ENCODE measurements at regions of chr20 and their contacts with region 1.

Region 1: GRCh38 chr20:2101865-2102584 is 398 bp downstream of the STK35 start:
- DNase-seq: peak; percentile 92 to 96
- ATAC-seq: peak; percentile 92 to 97 (median 94)
- H3K4me3 ChIP-seq: peak overlapping the region; percentile 67 to 98 (median 92)
- H3K27ac ChIP-seq: peak overlapping the region; percentile 97 to 100 (median 100)
- H3K4me1 ChIP-seq: peaks cover 9 to 45% (median 40%) of the 10 kb centered on the region in 9 donors
- H3K27me3 ChIP-seq: no peaks in the 10 kb centered on the region
- CTCF ChIP-seq: peak in 1 of 9 donors; percentile 3

Region 2: DNA sequence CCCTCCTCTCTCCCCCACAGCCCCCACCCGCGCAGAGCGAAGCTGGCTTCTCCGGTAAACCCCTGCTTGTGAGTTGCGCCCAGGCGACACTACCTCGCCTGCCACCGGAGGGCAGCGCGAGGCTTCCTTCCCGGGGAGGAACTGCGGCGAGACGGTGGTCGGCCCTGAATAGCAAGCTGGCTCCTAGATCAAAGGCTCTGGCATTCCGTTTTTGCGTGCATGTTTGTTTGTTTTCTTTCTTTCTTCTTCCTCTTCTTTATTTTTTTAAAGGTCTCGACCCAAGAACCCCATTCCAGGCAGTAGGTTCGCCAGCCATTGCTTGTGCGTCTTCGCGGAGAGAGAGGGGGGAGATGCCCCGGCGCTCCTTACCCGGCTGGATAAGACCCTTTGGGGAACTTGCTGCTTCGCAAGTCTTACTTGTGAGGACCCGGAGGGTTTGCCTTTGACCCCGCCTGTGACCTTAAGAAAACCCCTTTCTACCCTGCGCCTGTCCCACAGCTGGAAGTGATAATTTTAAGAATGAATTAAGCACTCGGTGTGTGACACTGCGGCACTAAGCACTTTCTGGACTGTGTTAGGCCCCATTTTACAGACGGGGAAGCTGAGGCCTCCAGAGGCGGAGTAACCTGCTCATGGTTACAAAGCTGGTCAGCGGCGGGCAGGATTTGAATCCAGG is 299.5 kb before region 1 on chr20:
- intact Hi-C with region 1: loop called in 1 of 10 experiments (anchors 10 kb)
- DNase-seq: peak; percentile 69 to 70
- ATAC-seq: peak; percentile 72 to 94 (median 88)
- H3K4me3 ChIP-seq: peak overlapping the region; percentile 18 to 76 (median 64)
- H3K27ac ChIP-seq: peak overlapping the region; percentile 57 to 90 (median 86)
- H3K4me1 ChIP-seq: peaks cover 6 to 39% (median 19%) of the 10 kb centered on the region in 9 donors
- H3K27me3 ChIP-seq: peaks cover 0 to 9% (median 0%) of the 10 kb centered on the region in 7 donors
- CTCF ChIP-seq: peak; percentile 41 to 85 (median 67)

Region 3: GRCh38 chr20:2045101-2045500 is 56.9 kb before region 1 on chr20:
- intact Hi-C with region 1: no loop called
- DNase-seq: no peak
- ATAC-seq: no peak
- H3K4me3 ChIP-seq: no peak overlapping the region
- H3K27ac ChIP-seq: no peak overlapping the region
- H3K4me1 ChIP-seq: no peaks in the 10 kb centered on the region
- H3K27me3 ChIP-seq: peaks cover 0 to 21% (median 5%) of the 10 kb centered on the region in 7 donors
- CTCF ChIP-seq: no peak

Region 4: DNA sequence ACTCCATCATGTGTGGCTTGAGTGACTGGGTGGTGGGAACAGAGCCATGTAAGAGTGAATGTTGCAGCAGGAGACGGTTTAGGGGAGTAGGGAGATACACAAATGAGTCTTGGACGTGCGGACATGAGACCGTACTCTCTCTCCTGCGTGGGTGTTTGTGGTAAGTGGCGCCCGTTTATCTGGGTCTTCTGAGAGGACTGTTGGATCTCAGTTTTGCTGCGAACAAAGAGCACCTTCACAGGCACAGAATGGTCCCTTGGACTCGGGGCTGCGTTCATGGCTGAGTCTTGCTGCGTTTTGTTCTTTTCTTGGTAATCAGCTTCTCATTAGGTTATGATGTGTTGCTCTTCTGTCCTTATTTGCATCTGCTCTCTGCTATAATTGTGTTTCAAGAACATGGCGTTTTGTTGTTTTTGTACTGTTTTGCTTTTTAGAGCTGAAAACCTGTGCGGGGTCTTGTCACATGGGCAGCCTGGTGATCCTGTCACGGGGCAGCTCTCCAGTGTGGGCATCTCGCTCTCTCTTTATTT is 28.1 kb after region 1 on chr20:
- intact Hi-C with region 1: no loop called
- DNase-seq: no peak
- ATAC-seq: peak in 3 of 8 donors; percentile 5 to 23 (median 9)
- H3K4me3 ChIP-seq: no peak overlapping the region
- H3K27ac ChIP-seq: peak overlapping the region in 7 of 10 donors; percentile 7 to 53 (median 21)
- H3K4me1 ChIP-seq: peaks cover 38 to 95% (median 88%) of the 10 kb centered on the region in 9 donors
- H3K27me3 ChIP-seq: no peaks in the 10 kb centered on the region
- CTCF ChIP-seq: no peak

Region 5: GRCh38 chr20:2140561-2140960 is 38.5 kb after region 1 on chr20:
- intact Hi-C with region 1: loop called in 7 of 10 experiments (anchors 2 to 5 kb)
- DNase-seq: peak; percentile 54 to 80
- ATAC-seq: peak; percentile 81 to 92 (median 84)
- H3K4me3 ChIP-seq: no peak overlapping the region
- H3K27ac ChIP-seq: peak overlapping the region; percentile 62 to 90 (median 80)
- H3K4me1 ChIP-seq: peaks cover 34 to 96% (median 75%) of the 10 kb centered on the region in 9 donors
- H3K27me3 ChIP-seq: no peaks in the 10 kb centered on the region
- CTCF ChIP-seq: no peak

Region 6: DNA sequence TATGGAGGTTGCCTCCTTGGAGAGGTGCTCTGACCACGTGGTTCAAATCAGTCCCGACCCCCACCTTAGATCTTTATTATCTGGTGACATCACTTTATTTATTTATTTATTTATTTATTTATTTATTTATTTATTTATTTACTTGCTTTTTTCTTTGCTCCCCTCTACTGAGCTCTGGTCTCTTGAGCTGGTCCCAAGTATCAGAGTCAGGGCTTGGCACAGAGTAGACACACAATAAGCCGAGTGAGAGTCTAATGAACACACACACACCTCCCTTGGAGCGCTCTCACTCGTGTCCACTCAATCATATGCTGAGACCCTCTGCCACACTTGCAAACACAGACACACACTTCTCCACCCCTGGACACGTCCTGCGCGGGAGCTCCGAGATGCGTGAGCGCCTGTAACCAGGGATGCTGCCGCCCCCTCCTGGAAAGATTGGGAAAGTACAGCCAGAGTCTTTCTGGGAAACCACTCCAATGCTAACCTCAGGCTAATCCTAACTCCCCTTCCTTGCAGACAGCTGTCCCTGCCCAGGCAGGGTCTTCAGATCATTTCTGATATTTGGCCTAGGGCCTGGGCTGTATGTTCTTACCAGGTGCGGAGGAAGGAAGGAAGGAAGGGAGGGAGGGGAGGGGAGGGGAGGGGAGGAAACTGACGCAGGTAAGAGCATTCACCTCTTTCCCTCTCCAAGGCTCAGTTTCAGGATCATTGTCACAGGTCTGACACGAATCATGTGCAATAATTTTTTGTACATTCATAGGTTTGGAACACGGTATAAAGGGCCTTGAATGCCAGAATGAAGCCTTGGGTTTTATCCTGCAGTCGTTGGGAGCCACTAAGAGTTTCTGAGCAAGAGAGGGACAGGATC is 70.5 kb after region 1 on chr20:
- intact Hi-C with region 1: loop called in 2 of 10 experiments (anchors 1 to 10 kb)
- DNase-seq: peak; percentile 64 to 72
- ATAC-seq: peak; percentile 46 to 90 (median 84)
- H3K4me3 ChIP-seq: no peak overlapping the region
- H3K27ac ChIP-seq: no peak overlapping the region
- H3K4me1 ChIP-seq: peaks cover 0 to 15% (median 4%) of the 10 kb centered on the region in 9 donors
- H3K27me3 ChIP-seq: peaks cover 0 to 6% (median 0%) of the 10 kb centered on the region in 7 donors
- CTCF ChIP-seq: peak; percentile 80 to 94 (median 91)

Measured in heart right ventricle (tissue), 16 donors.